H1 (cell line): ENCODE measurements at regions of chr3 and their contacts with region 1.

Region 1: GRCh38 chr3:8663177-8664061 is 18.8 kb upstream of the SSUH2 start:
- DNase-seq: peak; percentile 74 to 94
- H3K4me3 ChIP-seq: no peak overlapping the region
- H3K27ac ChIP-seq: no peak overlapping the region
- H3K4me1 ChIP-seq: peaks cover 0 to 6% (median 1%) of the 10 kb centered on the region in 4 experiments; a peak in 2 of 7 replicates
- H3K27me3 ChIP-seq: peaks cover 0 to 3% (median 0%) of the 10 kb centered on the region in 4 experiments; a peak in 2 of 7 replicates
- CTCF ChIP-seq: peak; percentile 66 to 80 (median 76)
- EP300 ChIP-seq: no peak
- POLR2A ChIP-seq: no peak
- RAD21 ChIP-seq: peak; percentile 67 to 76

Region 2: GRCh38 chr3:8741581-8742261 is 78.3 kb after region 1 on chr3:
- CTCF ChIA-PET with region 1: interaction called, 11 read pairs
- POLR2A ChIA-PET with region 1: no interaction called
- DNase-seq: peak in 1 of 2 experiments; percentile 70
- H3K4me3 ChIP-seq: peak overlapping the region in 1 of 4 experiments; percentile 42; a peak in 3 of 8 replicates
- H3K27ac ChIP-seq: no peak overlapping the region
- H3K4me1 ChIP-seq: peaks cover 1 to 20% (median 8%) of the 10 kb centered on the region in 4 experiments
- H3K27me3 ChIP-seq: peaks cover 0 to 4% (median 0%) of the 10 kb centered on the region in 4 experiments; a peak in 1 of 7 replicates
- CTCF ChIP-seq: no peak; a peak in 1 of 4 replicates
- EP300 ChIP-seq: no peak
- POLR2A ChIP-seq: no peak
- RAD21 ChIP-seq: no peak

Region 3: DNA sequence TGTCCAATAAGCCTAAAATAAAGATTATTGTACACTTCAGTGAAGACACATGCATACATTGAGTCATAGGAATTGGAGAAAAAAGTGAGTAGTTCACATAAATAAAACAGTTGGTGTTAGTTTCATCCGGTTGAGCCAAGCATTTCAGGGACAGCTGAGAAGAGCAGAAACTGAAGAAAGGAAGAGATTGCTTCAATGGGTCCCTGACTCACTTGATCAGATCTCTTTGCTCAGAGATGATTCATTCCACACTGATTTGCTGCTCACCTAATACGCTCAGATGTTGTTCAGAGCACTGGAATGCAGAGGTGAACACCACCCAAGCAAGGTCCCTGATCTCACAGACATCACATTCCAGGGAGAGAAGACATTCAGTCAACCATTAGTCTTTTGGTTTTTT is 206.2 kb after region 1 on chr3:
- CTCF ChIA-PET with region 1: no interaction called
- POLR2A ChIA-PET with region 1: no interaction called
- DNase-seq: no peak
- H3K4me3 ChIP-seq: no peak overlapping the region
- H3K27ac ChIP-seq: no peak overlapping the region
- H3K4me1 ChIP-seq: peaks cover 0 to 2% (median 0%) of the 10 kb centered on the region in 4 experiments; a peak in 3 of 7 replicates
- H3K27me3 ChIP-seq: no peaks in the 10 kb centered on the region
- CTCF ChIP-seq: no peak
- EP300 ChIP-seq: no peak
- POLR2A ChIP-seq: no peak
- RAD21 ChIP-seq: no peak